ENCODE measurements at regions of chr9 and their contacts with region 1.

Region 1: GRCh38 chr9:132944302-132945185 is at the start of gene TSC1:
- DNase-seq: peak; percentile 95 to 96
- ATAC-seq: peak; percentile 88 to 93
- H3K4me3 ChIP-seq: peak within 1 kb of the TSS; percentile 87 to 100 (median 94)
- H3K27ac ChIP-seq: peak within 1 kb of the TSS; percentile 94 to 99 (median 98)
- H3K4me1 ChIP-seq: peaks cover 39 to 47% of the 10 kb centered on the region in 2 donors
- H3K27me3 ChIP-seq: no peaks in the 10 kb centered on the region
- CTCF ChIP-seq: peak in 2 of 5 experiments; percentile 17 to 36
- POLR2A ChIP-seq: peak; percentile 36 to 69
- total RNA-seq, gene TSC1: 36.7 to 45.3 (median 39.7) TPM

Region 2: GRCh38 chr9:132877824-132878694 is 66.5 kb before region 1 on chr9 and contains the start of gene AK8:
- in situ Hi-C with region 1: no loop called
- intact Hi-C with region 1: loop called (anchors 1 kb)
- DNase-seq: peak; percentile 10 to 33
- ATAC-seq: peak; percentile 85
- H3K4me3 ChIP-seq: peak within 1 kb of the TSS; percentile 76 to 100 (median 89)
- H3K27ac ChIP-seq: peak within 1 kb of the TSS; percentile 39 to 77 (median 70)
- H3K4me1 ChIP-seq: peaks cover 0 to 10% of the 10 kb centered on the region in 2 donors
- H3K27me3 ChIP-seq: peaks cover 0 to 6% (median 5%) of the 10 kb centered on the region in 3 donors
- CTCF ChIP-seq: no peak
- POLR2A ChIP-seq: no peak
- total RNA-seq, gene AK8: not detected

Region 3: GRCh38 chr9:132901856-132902831 is 42.4 kb before region 1 on chr9:
- in situ Hi-C with region 1: no loop called
- intact Hi-C with region 1: loop called (anchors 1 kb)
- DNase-seq: peak in 1 of 2 donors; percentile 29
- ATAC-seq: peak; percentile 36 to 69
- H3K4me3 ChIP-seq: no peak overlapping the region
- H3K27ac ChIP-seq: no peak overlapping the region
- H3K4me1 ChIP-seq: no peaks in the 10 kb centered on the region
- H3K27me3 ChIP-seq: no peaks in the 10 kb centered on the region
- CTCF ChIP-seq: peak; percentile 59 to 88 (median 72)
- POLR2A ChIP-seq: no peak

Region 4: GRCh38 chr9:133030317-133031129 is 86.0 kb after region 1 on chr9 and contains the start of gene GTF3C5:
- in situ Hi-C with region 1: no loop called
- intact Hi-C with region 1: loop called (anchors 1 kb)
- DNase-seq: peak; percentile 92 to 94
- ATAC-seq: peak; percentile 99
- H3K4me3 ChIP-seq: peak within 1 kb of the TSS; percentile 85 to 97 (median 93)
- H3K27ac ChIP-seq: peak within 1 kb of the TSS; percentile 93 to 94 (median 94)
- H3K4me1 ChIP-seq: peaks cover 32 to 43% of the 10 kb centered on the region in 2 donors
- H3K27me3 ChIP-seq: no peaks in the 10 kb centered on the region
- CTCF ChIP-seq: peak in 2 of 5 experiments; percentile 16 to 30
- POLR2A ChIP-seq: peak; percentile 65 to 76
- total RNA-seq, gene GTF3C5: 48.1 to 55.3 (median 51.5) TPM

Region 5: GRCh38 chr9:133103183-133103986 is 158.8 kb after region 1 on chr9:
- in situ Hi-C with region 1: no loop called
- intact Hi-C with region 1: loop called (anchors 5 kb)
- DNase-seq: peak; percentile 63 to 78
- ATAC-seq: peak; percentile 76 to 91
- H3K4me3 ChIP-seq: no peak overlapping the region
- H3K27ac ChIP-seq: peak overlapping the region; percentile 52 to 77 (median 68)
- H3K4me1 ChIP-seq: peaks cover 10 to 16% of the 10 kb centered on the region in 2 donors
- H3K27me3 ChIP-seq: no peaks in the 10 kb centered on the region
- CTCF ChIP-seq: peak; percentile 98 to 100 (median 99)
- POLR2A ChIP-seq: no peak